CD4-positive, alpha-beta T cell (primary cell): ENCODE measurements at regions of chr5 and their contacts with region 1.

Region 1: GRCh38 chr5:157858527-157859226 is at the start of gene CLINT1:
- DNase-seq: peak; percentile 78 to 94 (median 86)
- ATAC-seq: peak; percentile 95
- H3K4me3 ChIP-seq: peak within 1 kb of the TSS; percentile 84
- H3K4me3 Mint-ChIP-seq: peak within 1 kb of the TSS; percentile 99
- H3K27ac ChIP-seq: peak within 1 kb of the TSS; percentile 81 to 89
- H3K27ac Mint-ChIP-seq: peak within 1 kb of the TSS; percentile 94
- H3K4me1 ChIP-seq: peaks cover 40% of the 10 kb centered on the region
- H3K4me1 Mint-ChIP-seq: peaks cover 83% of the 10 kb centered on the region
- H3K27me3 ChIP-seq: no peaks in the 10 kb centered on the region
- H3K27me3 Mint-ChIP-seq: no peaks in the 10 kb centered on the region
- CTCF ChIP-seq: no peak
- total RNA-seq, gene CLINT1: 89.9 to 91.3 TPM

Region 2: DNA sequence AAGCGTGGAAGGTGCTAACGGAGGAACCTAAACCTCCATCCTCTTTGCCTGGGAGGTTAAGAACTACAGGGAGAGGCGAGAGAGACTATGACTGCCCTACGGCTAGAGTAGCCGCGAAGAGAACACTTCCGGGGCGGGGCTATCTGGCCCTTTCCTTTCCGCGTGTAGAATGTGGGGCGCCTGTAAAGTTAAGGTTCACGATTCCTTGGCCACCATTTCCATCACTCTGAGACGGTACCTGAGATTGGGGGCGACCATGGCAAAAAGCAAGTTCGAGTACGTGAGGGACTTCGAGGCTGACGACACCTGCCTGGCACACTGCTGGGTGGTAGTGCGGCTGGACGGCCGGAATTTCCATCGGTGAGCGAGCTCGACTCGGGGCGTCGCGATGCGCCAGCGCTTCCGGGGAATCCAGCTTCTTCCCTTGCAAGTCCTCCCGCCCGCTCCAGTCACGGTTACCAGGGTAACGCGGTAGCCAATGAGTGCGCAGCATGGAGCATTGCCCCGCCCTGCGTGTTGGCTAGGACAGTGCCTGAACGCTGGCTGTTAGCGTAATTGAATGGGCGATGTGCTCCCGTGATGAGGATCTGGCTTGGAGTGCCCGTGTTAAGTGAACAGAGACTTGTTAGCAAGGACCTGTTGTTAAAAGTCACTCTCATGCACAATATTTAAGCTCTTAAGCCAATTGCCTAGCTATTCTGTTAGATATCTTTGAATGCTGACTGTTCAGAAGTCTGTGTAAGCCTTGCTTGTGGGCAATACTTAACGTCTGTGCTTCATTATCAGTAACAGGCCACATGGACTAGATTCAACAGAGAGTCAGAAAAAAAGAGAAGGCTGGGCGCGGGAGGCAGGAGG is 127.2 kb before region 1 on chr5 and contains the start of gene THG1L:
- CTCF ChIA-PET with region 1: no interaction called
- POLR2A ChIA-PET with region 1: interaction called, 3 read pairs
- intact Hi-C with region 1: loop called in 1 of 2 experiments (anchors 5 kb)
- DNase-seq: peak; percentile 94 to 99 (median 97)
- ATAC-seq: peak; percentile 97
- H3K4me3 ChIP-seq: peak within 1 kb of the TSS; percentile 90
- H3K4me3 Mint-ChIP-seq: peak within 1 kb of the TSS; percentile 94
- H3K27ac ChIP-seq: peak within 1 kb of the TSS; percentile 79 to 89
- H3K27ac Mint-ChIP-seq: peak within 1 kb of the TSS; percentile 91
- H3K4me1 ChIP-seq: peaks cover 9% of the 10 kb centered on the region
- H3K4me1 Mint-ChIP-seq: peaks cover 16% of the 10 kb centered on the region
- H3K27me3 ChIP-seq: no peaks in the 10 kb centered on the region
- H3K27me3 Mint-ChIP-seq: no peaks in the 10 kb centered on the region
- CTCF ChIP-seq: no peak
- total RNA-seq, gene THG1L: 4.1 to 4.6 TPM

Region 3: GRCh38 chr5:157900644-157901043 is 42.0 kb after region 1 on chr5:
- CTCF ChIA-PET with region 1: no interaction called
- POLR2A ChIA-PET with region 1: no interaction called
- intact Hi-C with region 1: no loop called
- DNase-seq: no peak
- ATAC-seq: no peak
- H3K4me3 ChIP-seq: no peak overlapping the region
- H3K4me3 Mint-ChIP-seq: no peak overlapping the region
- H3K27ac ChIP-seq: no peak overlapping the region
- H3K27ac Mint-ChIP-seq: no peak overlapping the region
- H3K4me1 ChIP-seq: no peaks in the 10 kb centered on the region
- H3K4me1 Mint-ChIP-seq: no peaks in the 10 kb centered on the region
- H3K27me3 ChIP-seq: no peaks in the 10 kb centered on the region
- H3K27me3 Mint-ChIP-seq: no peaks in the 10 kb centered on the region
- CTCF ChIP-seq: no peak

Region 4: GRCh38 chr5:157917899-157918809 is 59.5 kb after region 1 on chr5:
- CTCF ChIA-PET with region 1: no interaction called
- POLR2A ChIA-PET with region 1: interaction called, 5 read pairs
- intact Hi-C with region 1: loop called in 1 of 2 experiments (anchors 2 kb)
- DNase-seq: peak; percentile 19 to 71 (median 44)
- ATAC-seq: peak; percentile 63
- H3K4me3 ChIP-seq: no peak overlapping the region
- H3K4me3 Mint-ChIP-seq: peak overlapping the region; percentile 9
- H3K27ac ChIP-seq: peak overlapping the region in 1 of 2 donors; percentile 8
- H3K27ac Mint-ChIP-seq: peak overlapping the region; percentile 60
- H3K4me1 ChIP-seq: peaks cover 25% of the 10 kb centered on the region
- H3K4me1 Mint-ChIP-seq: peaks cover 29% of the 10 kb centered on the region
- H3K27me3 ChIP-seq: no peaks in the 10 kb centered on the region
- H3K27me3 Mint-ChIP-seq: no peaks in the 10 kb centered on the region
- CTCF ChIP-seq: peak; percentile 32

Region 5: GRCh38 chr5:157948738-157949410 is 90.2 kb after region 1 on chr5:
- CTCF ChIA-PET with region 1: interaction called, 9 read pairs
- POLR2A ChIA-PET with region 1: interaction called, 5 read pairs
- intact Hi-C with region 1: loop called in 1 of 2 experiments (anchors 1 kb)
- DNase-seq: peak; percentile 62 to 87 (median 72)
- ATAC-seq: peak; percentile 99
- H3K4me3 ChIP-seq: no peak overlapping the region
- H3K4me3 Mint-ChIP-seq: no peak overlapping the region
- H3K27ac ChIP-seq: no peak overlapping the region
- H3K27ac Mint-ChIP-seq: no peak overlapping the region
- H3K4me1 ChIP-seq: peaks cover 6% of the 10 kb centered on the region
- H3K4me1 Mint-ChIP-seq: peaks cover 5% of the 10 kb centered on the region
- H3K27me3 ChIP-seq: peaks cover 4% of the 10 kb centered on the region in 2 experiments
- H3K27me3 Mint-ChIP-seq: peaks cover 13% of the 10 kb centered on the region
- CTCF ChIP-seq: peak; percentile 72